ENCODE measurements at regions of chr18 and their contacts with region 1.

Region 1: DNA sequence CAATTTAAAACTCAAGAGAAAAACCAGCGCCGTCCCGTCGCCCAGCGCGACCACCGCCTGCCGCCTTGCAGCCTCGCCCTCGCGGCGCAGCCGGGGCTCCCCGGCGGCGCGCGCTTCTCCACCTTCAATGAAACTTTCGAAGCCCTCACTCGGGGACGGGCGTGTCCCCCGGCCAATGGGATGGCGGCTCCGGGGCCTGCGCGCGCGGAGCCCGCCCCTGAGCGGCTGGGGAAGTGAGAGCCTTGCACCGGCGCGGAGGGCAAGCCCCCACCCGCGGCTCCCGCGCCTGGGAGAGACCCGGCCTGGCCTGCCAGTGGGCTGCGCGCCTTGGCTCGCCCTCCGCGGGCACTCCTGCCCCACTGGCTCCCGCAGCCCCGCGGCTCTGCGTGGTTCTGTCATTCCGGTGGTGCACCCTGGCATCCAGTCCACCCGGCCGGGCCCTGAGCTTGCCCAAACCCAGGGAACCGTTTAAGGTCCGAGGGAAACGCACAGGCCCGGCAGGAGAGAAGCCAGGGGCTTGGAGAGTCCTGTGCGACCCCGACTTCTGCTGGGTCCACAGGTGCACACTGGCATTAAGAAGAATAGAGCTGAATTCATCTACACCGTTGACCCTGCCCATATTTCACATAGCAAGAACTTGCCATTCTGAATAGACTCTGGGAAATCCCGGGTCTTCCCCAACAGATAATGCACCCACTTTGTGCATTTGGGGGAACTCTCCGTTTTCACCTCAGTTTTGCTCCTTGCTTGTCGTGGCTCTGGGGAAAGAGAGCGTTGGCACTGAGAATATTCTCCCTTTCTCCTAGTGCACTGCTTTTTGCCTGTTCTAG is at the start of gene PIEZO2:
- DNase-seq: peak; percentile 45 to 97 (median 72)

Region 2: DNA sequence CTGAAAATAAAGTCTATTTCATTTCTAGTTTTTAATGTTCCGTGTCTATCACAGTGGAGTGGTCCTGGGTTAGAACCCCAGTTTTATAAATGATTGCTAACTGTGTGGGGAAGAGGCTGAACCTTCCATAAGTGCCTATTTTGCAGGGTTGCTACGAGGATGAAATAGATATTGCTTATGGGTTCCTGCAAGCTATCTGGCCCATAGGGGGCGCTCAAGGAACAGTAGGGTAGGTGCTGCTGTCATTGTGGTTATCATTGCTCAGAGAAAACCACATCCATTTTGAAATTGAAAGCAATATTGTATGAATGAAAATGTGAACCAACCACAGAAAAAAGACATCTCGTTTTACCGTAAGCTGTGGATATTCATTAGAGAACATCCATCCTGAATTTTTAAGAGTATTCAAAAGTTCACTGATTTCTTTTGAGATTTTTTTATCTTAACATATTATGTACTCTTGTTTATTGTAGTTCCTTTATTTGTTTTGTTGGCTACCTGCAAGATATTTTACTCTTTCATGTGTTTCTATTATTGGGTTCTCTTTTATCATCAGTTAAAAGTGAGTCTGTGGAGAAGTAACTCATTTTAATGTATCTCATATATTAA is 362.3 kb before region 1 on chr18:
- intact Hi-C with region 1: loop called (anchors 5 kb)
- DNase-seq: peak in 7 of 10 donors; percentile 26 to 93 (median 75)

Region 3: DNA sequence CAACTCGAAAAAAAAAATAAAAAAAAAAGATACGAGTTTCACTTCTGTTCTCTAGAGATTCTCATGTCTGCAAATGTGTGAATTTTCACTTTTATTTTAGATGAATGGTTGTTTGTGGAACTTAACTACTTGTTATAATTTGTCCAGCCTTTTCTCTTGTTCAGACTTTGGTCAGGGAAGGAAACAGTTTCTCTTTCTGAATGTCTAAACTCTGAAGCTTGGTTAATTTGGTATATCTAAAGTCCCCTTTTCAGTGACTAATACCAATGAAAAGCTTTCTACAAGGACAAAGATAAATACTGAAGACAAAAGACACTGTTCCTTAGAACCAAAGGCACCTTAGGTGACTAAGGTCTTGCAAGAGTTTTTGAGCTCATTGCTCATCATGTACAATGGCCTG is 144.1 kb after region 1 on chr18:
- intact Hi-C with region 1: no loop called
- DNase-seq: no peak

Region 4: GRCh38 chr18:11695736-11696135 is 546.1 kb after region 1 on chr18:
- intact Hi-C with region 1: no loop called
- DNase-seq: no peak